ENCODE measurements at regions of chr1 and their contacts with region 1.

Region 1: GRCh38 chr1:244171241-244171985 is 120.3 kb downstream of the ZBTB18 start:
- DNase-seq: peak in 1 of 2 donors; percentile 13
- ATAC-seq: peak in 5 of 8 donors; percentile 27 to 68 (median 37)
- H3K4me3 ChIP-seq: no peak overlapping the region
- H3K27ac ChIP-seq: peak overlapping the region in 2 of 10 donors; percentile 15 to 38
- H3K4me1 ChIP-seq: no peaks in the 10 kb centered on the region
- H3K27me3 ChIP-seq: no peaks in the 10 kb centered on the region
- CTCF ChIP-seq: no peak

Region 2: DNA sequence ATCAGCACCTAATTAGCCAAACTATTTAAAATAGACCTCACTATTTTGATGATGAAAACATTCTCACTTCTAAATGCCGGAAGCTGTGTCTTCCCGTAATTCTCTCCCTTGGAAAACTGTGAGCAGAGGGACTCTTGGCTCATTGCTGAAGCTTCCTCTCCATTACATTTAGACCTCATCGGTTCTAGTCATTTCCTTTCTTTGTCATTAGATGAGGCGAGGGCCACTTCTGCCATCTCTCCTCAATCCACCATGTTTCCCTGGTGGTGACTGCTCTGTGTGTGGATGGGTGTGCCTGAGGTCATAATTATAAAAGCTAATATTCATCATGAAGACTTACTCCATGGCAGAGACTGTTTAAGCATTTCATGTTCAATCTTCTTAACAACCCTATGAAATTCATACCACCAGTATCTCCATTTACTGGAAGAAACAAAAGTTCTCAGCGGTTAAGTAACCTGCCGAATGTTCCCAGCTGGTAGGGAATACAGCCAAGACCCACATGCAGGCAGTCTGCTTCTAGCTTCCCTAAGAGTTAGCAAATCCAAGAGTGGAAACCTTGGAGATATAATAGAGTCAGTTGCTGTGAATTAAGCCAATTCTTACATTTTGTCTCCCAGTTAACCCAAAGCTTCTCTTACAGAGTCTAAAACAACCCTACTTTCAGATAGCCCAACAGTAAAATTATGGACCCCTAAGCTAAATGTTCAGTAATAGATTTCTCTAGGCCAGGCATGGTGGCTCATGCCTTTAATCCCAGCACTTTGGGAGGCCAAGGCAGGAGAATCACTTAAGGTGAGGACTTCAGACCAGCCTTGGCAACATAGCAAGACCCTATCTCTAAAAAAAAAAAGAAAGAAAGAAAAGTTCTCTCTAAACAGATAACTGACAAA is 35.9 kb after region 1 on chr1:
- intact Hi-C with region 1: loop called in 1 of 10 experiments (anchors 5 kb)
- DNase-seq: no peak
- ATAC-seq: peak in 6 of 8 donors; percentile 23 to 81 (median 57)
- H3K4me3 ChIP-seq: no peak overlapping the region
- H3K27ac ChIP-seq: peak overlapping the region in 8 of 10 donors; percentile 12 to 73 (median 45)
- H3K4me1 ChIP-seq: peaks cover 0 to 28% (median 12%) of the 10 kb centered on the region in 9 donors
- H3K27me3 ChIP-seq: no peaks in the 10 kb centered on the region
- CTCF ChIP-seq: no peak

Region 3: DNA sequence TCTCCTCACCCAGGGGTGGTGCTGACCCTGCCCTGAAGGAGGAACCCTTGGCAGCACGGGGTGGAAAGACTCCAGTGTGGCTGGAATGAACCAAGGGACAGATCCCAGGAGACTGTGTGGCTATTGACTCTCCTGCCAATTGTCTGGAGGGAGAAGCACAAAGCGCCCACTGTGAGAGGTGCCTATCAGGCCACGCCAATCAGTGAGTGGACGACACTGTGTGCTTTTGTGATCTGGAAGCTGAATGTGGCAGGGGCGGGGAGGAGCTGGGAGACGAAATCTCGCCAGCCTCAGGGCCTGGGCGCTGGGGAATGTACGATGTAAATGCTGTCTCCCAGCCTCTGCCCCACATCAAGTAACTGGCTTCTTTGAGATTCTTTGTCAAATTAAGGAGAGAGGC is 46.8 kb after region 1 on chr1:
- intact Hi-C with region 1: no loop called
- DNase-seq: no peak
- ATAC-seq: no peak
- H3K4me3 ChIP-seq: no peak overlapping the region
- H3K27ac ChIP-seq: no peak overlapping the region
- H3K4me1 ChIP-seq: peaks cover 0 to 14% (median 8%) of the 10 kb centered on the region in 9 donors
- H3K27me3 ChIP-seq: peaks cover 0 to 7% (median 0%) of the 10 kb centered on the region in 7 donors
- CTCF ChIP-seq: no peak

Measured in heart right ventricle (tissue), 16 donors.